ENCODE measurements at regions of chr1 and their contacts with region 1.

Region 1: GRCh38 chr1:247103859-247104591 is at the start of gene ZNF669:
- DNase-seq: peak; percentile 99
- H3K4me3 ChIP-seq: peak within 1 kb of the TSS; percentile 77 to 93 (median 88)
- H3K27ac ChIP-seq: peak within 1 kb of the TSS; percentile 86 to 95 (median 88)
- H3K4me1 ChIP-seq: peaks cover 13 to 30% (median 28%) of the 10 kb centered on the region in 4 donors
- H3K27me3 ChIP-seq: no peaks in the 10 kb centered on the region
- CTCF ChIP-seq: no peak
- EP300 ChIP-seq: no peak
- POLR2A ChIP-seq: peak; percentile 34
- total RNA-seq, gene ZNF669: 4.8 to 6.2 (median 5.9) TPM

Region 2: GRCh38 chr1:246198115-246198816 is 905.8 kb before region 1 on chr1:
- intact Hi-C with region 1: no loop called
- DNase-seq: no peak
- H3K4me3 ChIP-seq: no peak overlapping the region
- H3K27ac ChIP-seq: no peak overlapping the region
- H3K4me1 ChIP-seq: peaks cover 0 to 9% (median 0%) of the 10 kb centered on the region in 4 donors
- H3K27me3 ChIP-seq: no peaks in the 10 kb centered on the region
- CTCF ChIP-seq: no peak
- EP300 ChIP-seq: no peak
- POLR2A ChIP-seq: no peak

Region 3: GRCh38 chr1:246931549-246932365 is 172.3 kb before region 1 on chr1 and contains the start of gene AHCTF1:
- intact Hi-C with region 1: loop called (anchors 10 kb)
- DNase-seq: peak; percentile 98
- H3K4me3 ChIP-seq: peak within 1 kb of the TSS; percentile 89 to 99 (median 96)
- H3K27ac ChIP-seq: peak within 1 kb of the TSS; percentile 95 to 99 (median 98)
- H3K4me1 ChIP-seq: peaks cover 23 to 48% (median 46%) of the 10 kb centered on the region in 4 donors
- H3K27me3 ChIP-seq: no peaks in the 10 kb centered on the region
- CTCF ChIP-seq: peak in 1 of 3 experiments; percentile 2
- EP300 ChIP-seq: no peak
- POLR2A ChIP-seq: peak; percentile 91
- total RNA-seq, gene AHCTF1: 30.7 to 45.3 (median 42.0) TPM

Region 4: GRCh38 chr1:247210376-247211117 is 106.5 kb after region 1 on chr1:
- intact Hi-C with region 1: loop called (anchors 10 kb)
- DNase-seq: peak; percentile 99
- H3K4me3 ChIP-seq: peak overlapping the region; percentile 85 to 96 (median 92)
- H3K27ac ChIP-seq: peak overlapping the region; percentile 81 to 93 (median 88)
- H3K4me1 ChIP-seq: peaks cover 17 to 30% (median 22%) of the 10 kb centered on the region in 4 donors
- H3K27me3 ChIP-seq: no peaks in the 10 kb centered on the region
- CTCF ChIP-seq: peak in 1 of 3 experiments; percentile 4
- EP300 ChIP-seq: no peak
- POLR2A ChIP-seq: no peak

Measured in esophagus muscularis mucosa (tissue), 4 donors.